Posterior vena cava (tissue), 2 donors: ENCODE measurements at regions of chr6 and their contacts with region 1.

Region 1: GRCh38 chr6:593139-593906 is 63.6 kb downstream of the HUS1B start:
- DNase-seq: no peak

Region 2: GRCh38 chr6:1396952-1397868 is 803.9 kb after region 1 on chr6:
- intact Hi-C with region 1: loop called (anchors 5 to 10 kb)
- DNase-seq: no peak

Region 3: GRCh38 chr6:1686117-1687098 is 1093.1 kb after region 1 on chr6:
- intact Hi-C with region 1: no loop called
- DNase-seq: no peak